Heart right ventricle (tissue), 16 donors: ENCODE measurements at regions of chr19 and their contacts with region 1.

Region 1: GRCh38 chr19:47745010-47745901 is at the start of gene NOP53:
- DNase-seq: peak; percentile 97
- ATAC-seq: peak; percentile 62 to 81 (median 72)
- H3K4me3 ChIP-seq: peak within 1 kb of the TSS; percentile 58 to 86 (median 76)
- H3K27ac ChIP-seq: peak within 1 kb of the TSS; percentile 91 to 99 (median 96)
- H3K4me1 ChIP-seq: peaks cover 17 to 62% (median 42%) of the 10 kb centered on the region in 9 donors
- H3K27me3 ChIP-seq: no peaks in the 10 kb centered on the region
- CTCF ChIP-seq: peak in 1 of 9 donors; percentile 9
- total RNA-seq, gene NOP53: 131 to 208 (median 177) TPM

Region 2: DNA sequence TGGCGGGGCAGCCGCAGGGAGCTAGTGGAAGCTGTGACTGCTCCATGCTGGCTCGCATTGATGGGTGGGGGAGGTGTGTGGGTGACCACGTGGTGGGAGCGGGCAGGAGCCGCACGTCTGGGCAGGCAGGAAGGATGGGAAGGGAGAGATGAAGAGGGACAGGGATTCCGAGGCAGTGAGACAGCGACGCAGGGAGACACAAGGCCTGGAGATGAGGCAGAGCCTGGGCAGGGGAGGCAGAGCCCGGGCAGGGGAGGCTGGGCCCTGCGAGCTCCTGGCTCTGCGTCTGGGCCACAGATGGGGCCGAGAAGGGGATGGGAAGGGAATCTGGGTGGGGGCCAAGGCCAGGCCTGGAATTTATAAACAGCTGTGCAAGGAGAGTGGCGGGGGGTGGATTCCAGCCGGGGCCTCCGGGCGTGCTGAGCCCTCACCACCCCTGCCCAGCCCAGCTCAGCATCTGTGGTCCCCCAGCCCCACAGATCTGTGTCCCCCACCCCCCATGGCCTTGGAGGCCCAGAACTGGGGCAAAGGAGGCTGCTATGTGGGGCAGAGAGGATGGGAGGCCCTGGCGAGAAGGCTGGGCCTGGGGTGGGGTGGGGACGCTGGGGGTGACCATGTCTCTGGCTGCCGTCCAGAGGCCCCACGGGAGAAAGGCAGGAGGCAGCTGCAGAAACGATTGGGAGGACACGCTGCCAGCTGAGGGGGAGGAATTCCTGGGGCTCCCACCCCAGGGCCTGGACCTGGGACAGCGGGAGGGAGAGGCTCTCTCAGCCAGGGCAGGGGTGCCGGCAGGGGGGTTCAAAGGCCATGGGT is 26.0 kb before region 1 on chr19:
- intact Hi-C with region 1: loop called in 1 of 10 experiments (anchors 2 kb)
- DNase-seq: peak; percentile 91 to 92
- ATAC-seq: peak; percentile 79 to 89 (median 86)
- H3K4me3 ChIP-seq: peak overlapping the region in 8 of 10 donors; percentile 6 to 69 (median 32)
- H3K27ac ChIP-seq: peak overlapping the region; percentile 69 to 92 (median 82)
- H3K4me1 ChIP-seq: peaks cover 25 to 96% (median 67%) of the 10 kb centered on the region in 9 donors
- H3K27me3 ChIP-seq: peaks cover 0 to 12% (median 0%) of the 10 kb centered on the region in 7 donors
- CTCF ChIP-seq: no peak

Region 3: GRCh38 chr19:47779524-47780214 is 34.4 kb after region 1 on chr19:
- intact Hi-C with region 1: loop called in 1 of 10 experiments (anchors 5 kb)
- DNase-seq: peak; percentile 77 to 87
- ATAC-seq: peak; percentile 40 to 84 (median 76)
- H3K4me3 ChIP-seq: peak overlapping the region; percentile 78 to 100 (median 91)
- H3K27ac ChIP-seq: peak overlapping the region; percentile 98 to 100 (median 99)
- H3K4me1 ChIP-seq: peaks cover 10 to 59% (median 45%) of the 10 kb centered on the region in 9 donors
- H3K27me3 ChIP-seq: no peaks in the 10 kb centered on the region
- CTCF ChIP-seq: no peak